Natural killer cell (primary cell): ENCODE measurements at regions of chrX and their contacts with region 1.

Region 1: GRCh38 chrX:134520860-134521390 is 61.0 kb downstream of the HPRT1 start:
- DNase-seq: peak in 1 of 2 donors; percentile 19
- ATAC-seq: peak in 1 of 3 donors; percentile 38
- H3K4me3 ChIP-seq: no peak overlapping the region
- H3K4me3 Mint-ChIP-seq: no peak overlapping the region
- H3K27ac ChIP-seq: no peak overlapping the region
- H3K27ac Mint-ChIP-seq: no peak overlapping the region
- H3K4me1 ChIP-seq: no peaks in the 10 kb centered on the region
- H3K4me1 Mint-ChIP-seq: peaks cover 8% of the 10 kb centered on the region in 2 donors
- H3K27me3 ChIP-seq: no peaks in the 10 kb centered on the region
- H3K27me3 Mint-ChIP-seq: no peaks in the 10 kb centered on the region
- CTCF ChIP-seq: no peak

Region 2: GRCh38 chrX:134782796-134783195 is 261.9 kb after region 1 on chrX:
- intact Hi-C with region 1: loop called (anchors 2 kb)
- DNase-seq: peak in 1 of 2 donors; percentile 32
- ATAC-seq: no peak
- H3K4me3 ChIP-seq: no peak overlapping the region
- H3K4me3 Mint-ChIP-seq: no peak overlapping the region
- H3K27ac ChIP-seq: no peak overlapping the region
- H3K27ac Mint-ChIP-seq: no peak overlapping the region
- H3K4me1 ChIP-seq: no peaks in the 10 kb centered on the region
- H3K4me1 Mint-ChIP-seq: no peaks in the 10 kb centered on the region
- H3K27me3 ChIP-seq: no peaks in the 10 kb centered on the region
- H3K27me3 Mint-ChIP-seq: no peaks in the 10 kb centered on the region
- CTCF ChIP-seq: peak; percentile 21